ENCODE measurements at regions of chrX and their contacts with region 1.

Region 1: GRCh38 chrX:49878834-49879659 is at the start of gene USP27X:
- DNase-seq: peak; percentile 27
- ATAC-seq: peak; percentile 96
- H3K4me3 ChIP-seq: peak within 1 kb of the TSS; percentile 55; the same call in 1 of the 2 replicates
- H3K27ac ChIP-seq: no peak within 1 kb of the TSS; the same call in 1 of the 2 replicates
- H3K4me1 ChIP-seq: no peaks in the 10 kb centered on the region; the same call in 1 of the 2 replicates
- H3K27me3 ChIP-seq: no peaks in the 10 kb centered on the region
- CTCF ChIP-seq: peak; percentile 34 to 43 (median 39); a peak in 4 of 6 replicates
- EP300 ChIP-seq: no peak
- POLR2A ChIP-seq: peak; percentile 58; the same call in 1 of the 2 replicates
- RAD21 ChIP-seq: no peak
- polyA plus RNA-seq, gene USP27X: 0.31 to 0.33 TPM

Region 2: DNA sequence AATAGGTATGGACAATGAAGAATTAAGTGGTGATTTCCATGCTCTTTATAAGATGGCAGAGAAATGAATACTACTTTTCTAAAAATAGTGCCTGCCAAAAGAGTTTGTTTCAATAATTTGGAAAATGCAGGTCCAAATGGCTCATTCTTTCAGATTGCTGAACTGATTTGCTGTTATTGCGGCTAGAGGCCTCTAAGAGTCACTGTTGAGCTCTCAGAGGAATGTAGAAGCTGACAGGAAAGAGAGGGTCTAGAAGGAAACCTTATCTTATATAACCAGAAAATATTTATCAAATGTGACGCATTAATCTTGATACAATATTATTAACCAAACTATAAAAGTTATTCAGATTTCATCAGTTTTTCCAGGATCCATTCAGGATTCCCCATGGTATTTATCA is 117.6 kb before region 1 on chrX:
- CTCF ChIA-PET with region 1: interaction called, 19 read pairs
- POLR2A ChIA-PET with region 1: no interaction called
- RAD21 ChIA-PET with region 1: no interaction called
- SMC1A ChIA-PET with region 1: interaction called, 7 read pairs
- in situ Hi-C with region 1: no loop called
- intact Hi-C with region 1: loop called (anchors 1 kb)
- DNase-seq: no peak
- ATAC-seq: peak; percentile 50; the same call in 1 of the 3 replicates
- H3K4me3 ChIP-seq: no peak overlapping the region
- H3K27ac ChIP-seq: no peak overlapping the region
- H3K4me1 ChIP-seq: no peaks in the 10 kb centered on the region
- H3K27me3 ChIP-seq: no peaks in the 10 kb centered on the region
- CTCF ChIP-seq: peak; percentile 51 to 61 (median 61)
- EP300 ChIP-seq: no peak
- POLR2A ChIP-seq: no peak
- RAD21 ChIP-seq: peak; percentile 64

Region 3: DNA sequence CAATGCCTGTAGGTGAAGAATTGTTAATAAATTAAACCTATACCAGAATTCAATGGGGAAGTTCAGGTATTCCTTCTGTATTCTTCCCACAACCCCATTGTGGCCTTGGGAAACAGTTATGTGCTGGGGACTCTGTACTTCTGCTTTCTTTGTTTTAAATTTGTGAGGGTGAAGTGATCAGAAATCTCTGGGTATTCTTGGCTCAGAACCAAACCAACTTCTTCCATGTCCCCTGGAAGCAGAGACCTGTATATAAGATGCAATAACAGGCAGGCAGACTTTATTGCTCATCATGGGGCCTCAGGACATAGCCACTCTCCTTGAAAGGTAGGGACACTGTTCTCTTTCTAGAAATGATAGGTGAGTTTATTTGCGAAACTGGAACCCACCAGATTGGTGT is 19.6 kb before region 1 on chrX:
- CTCF ChIA-PET with region 1: no interaction called
- POLR2A ChIA-PET with region 1: no interaction called
- RAD21 ChIA-PET with region 1: no interaction called
- SMC1A ChIA-PET with region 1: no interaction called
- in situ Hi-C with region 1: no loop called
- intact Hi-C with region 1: no loop called
- DNase-seq: no peak
- ATAC-seq: no peak
- H3K4me3 ChIP-seq: no peak overlapping the region
- H3K27ac ChIP-seq: no peak overlapping the region
- H3K4me1 ChIP-seq: no peaks in the 10 kb centered on the region
- H3K27me3 ChIP-seq: no peaks in the 10 kb centered on the region
- CTCF ChIP-seq: no peak
- EP300 ChIP-seq: no peak
- POLR2A ChIP-seq: no peak
- RAD21 ChIP-seq: no peak

Measured in GM12878 (cell line).